HEK293 (cell line): ENCODE measurements at regions of chr10 and their contacts with region 1.

Region 1: DNA sequence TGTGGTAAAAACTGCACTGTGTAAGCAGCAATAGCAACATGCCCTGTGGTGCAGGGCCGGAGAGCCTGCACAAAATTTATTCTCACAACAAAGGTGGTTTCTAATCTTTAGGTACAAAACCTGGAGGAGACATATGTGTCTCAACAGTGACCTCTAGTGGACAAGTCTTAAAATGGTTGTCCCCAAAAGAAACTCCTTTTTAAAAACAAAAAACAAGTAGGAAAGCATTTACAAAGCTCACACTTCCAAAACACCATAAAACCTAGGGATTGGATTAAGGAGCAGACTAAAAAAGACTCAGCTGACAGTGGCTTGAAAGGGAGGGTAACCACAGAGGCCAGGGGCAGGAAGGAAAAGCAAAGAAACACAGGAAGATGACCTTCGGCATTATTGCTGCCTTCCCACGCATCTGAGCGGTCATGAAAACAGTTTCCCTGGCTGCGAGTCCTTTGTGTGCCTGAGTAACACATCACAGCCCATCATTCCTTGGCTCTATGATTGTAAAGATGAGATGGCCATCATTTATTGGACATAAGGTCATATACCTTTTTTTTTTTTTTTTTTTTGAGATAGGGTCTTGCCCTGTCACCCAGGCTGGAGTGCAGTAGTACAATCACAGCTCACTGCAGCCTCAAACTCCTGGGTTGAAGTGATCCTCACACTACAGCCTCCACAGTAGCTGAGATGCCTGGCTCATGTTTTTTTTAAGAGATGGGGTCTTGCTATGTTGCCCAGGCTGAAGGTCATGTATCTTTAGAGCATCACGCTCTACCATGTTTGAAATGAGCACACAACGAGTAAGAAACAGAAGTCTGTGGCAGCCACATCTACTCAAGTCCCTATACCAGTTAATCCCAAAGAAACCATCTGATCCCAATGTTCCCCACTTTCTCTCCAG is 39.5 kb downstream of the RSU1 start:
- H3K4me3 ChIP-seq: no peak overlapping the region
- H3K27ac ChIP-seq: no peak overlapping the region
- H3K4me1 ChIP-seq: no peaks in the 10 kb centered on the region
- CTCF ChIP-seq: 0 out of 2 replicates have a peak, but pooled peaks have one; percentile 29

Region 2: GRCh38 chr10:15901889-15902288 is 875.8 kb before region 1 on chr10:
- CTCF ChIA-PET with region 1: interaction called, 11 read pairs
- POLR2A ChIA-PET with region 1: no interaction called
- H3K4me3 ChIP-seq: no peak overlapping the region
- H3K27ac ChIP-seq: no peak overlapping the region
- H3K4me1 ChIP-seq: no peaks in the 10 kb centered on the region
- CTCF ChIP-seq: no peak

Region 3: GRCh38 chr10:16788125-16788524 is 10.4 kb after region 1 on chr10:
- CTCF ChIA-PET with region 1: interaction called, 11 read pairs
- POLR2A ChIA-PET with region 1: no interaction called
- H3K4me3 ChIP-seq: no peak overlapping the region
- H3K27ac ChIP-seq: no peak overlapping the region
- H3K4me1 ChIP-seq: no peaks in the 10 kb centered on the region
- CTCF ChIP-seq: no peak

Region 4: GRCh38 chr10:17512341-17513001 is 734.7 kb after region 1 on chr10:
- CTCF ChIA-PET with region 1: no interaction called
- POLR2A ChIA-PET with region 1: no interaction called
- H3K4me3 ChIP-seq: no peak overlapping the region
- H3K27ac ChIP-seq: no peak overlapping the region
- H3K4me1 ChIP-seq: no peaks in the 10 kb centered on the region; the same call in 1 of the 2 replicates
- CTCF ChIP-seq: no peak